ENCODE measurements at regions of chr11 and their contacts with region 1.

Region 1: DNA sequence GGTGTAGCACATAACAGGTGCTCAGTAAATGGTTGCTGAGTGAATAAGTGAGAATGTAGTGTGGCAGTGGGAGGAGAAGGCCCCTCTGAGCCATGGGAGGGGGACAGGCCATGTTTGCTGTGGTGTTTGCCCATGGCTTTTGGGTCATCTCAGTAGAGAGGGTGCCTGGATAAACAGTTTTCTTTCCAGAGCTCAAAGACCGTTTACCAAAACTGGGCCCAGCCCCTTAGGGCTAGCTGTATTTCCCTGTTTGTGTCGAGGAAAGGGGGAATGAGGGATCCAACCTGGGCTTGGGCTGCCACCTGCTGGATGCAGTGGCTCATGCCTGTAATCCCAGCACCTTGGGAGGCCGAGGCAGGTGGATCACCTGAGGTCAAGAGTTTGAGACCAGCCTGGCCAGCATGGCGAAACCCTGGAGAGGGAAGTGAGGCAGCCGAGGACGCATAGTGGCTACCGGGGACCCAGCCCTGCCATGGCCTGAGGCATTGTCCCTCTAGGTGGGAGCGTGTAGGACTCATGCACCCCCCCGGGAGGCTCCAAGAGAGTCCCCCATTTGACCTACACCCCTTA is 8.7 kb upstream of the LTO1 start:
- DNase-seq: peak; percentile 30
- H3K4me3 ChIP-seq: no peak overlapping the region
- H3K27ac ChIP-seq: no peak overlapping the region
- H3K4me1 ChIP-seq: peaks cover 11% of the 10 kb centered on the region
- H3K27me3 ChIP-seq: no peaks in the 10 kb centered on the region
- CTCF ChIP-seq: peak; percentile 43 to 71

Region 2: GRCh38 chr11:69427337-69427736 is 256.5 kb before region 1 on chr11:
- CTCF ChIA-PET with region 1: no interaction called
- dilution Hi-C with region 1: no loop called
- in situ Hi-C with region 1: no loop called
- intact Hi-C with region 1: no loop called
- DNase-seq: no peak
- H3K4me3 ChIP-seq: no peak overlapping the region
- H3K27ac ChIP-seq: no peak overlapping the region
- H3K4me1 ChIP-seq: peaks cover 1% of the 10 kb centered on the region
- H3K27me3 ChIP-seq: no peaks in the 10 kb centered on the region
- CTCF ChIP-seq: no peak

Region 3: GRCh38 chr11:69718147-69718546 is 34.3 kb after region 1 on chr11:
- CTCF ChIA-PET with region 1: no interaction called
- dilution Hi-C with region 1: no loop called
- in situ Hi-C with region 1: no loop called
- intact Hi-C with region 1: no loop called
- DNase-seq: no peak
- H3K4me3 ChIP-seq: no peak overlapping the region
- H3K27ac ChIP-seq: no peak overlapping the region
- H3K4me1 ChIP-seq: no peaks in the 10 kb centered on the region
- H3K27me3 ChIP-seq: peaks cover 2% of the 10 kb centered on the region
- CTCF ChIP-seq: peak; percentile 11 to 27

Region 4: GRCh38 chr11:69775163-69775755 is 91.4 kb after region 1 on chr11 and contains the start of gene FGF4:
- CTCF ChIA-PET with region 1: no interaction called
- dilution Hi-C with region 1: no loop called
- in situ Hi-C with region 1: no loop called
- intact Hi-C with region 1: no loop called
- DNase-seq: peak; percentile 1
- H3K4me3 ChIP-seq: no peak within 1 kb of the TSS
- H3K27ac ChIP-seq: no peak within 1 kb of the TSS
- H3K4me1 ChIP-seq: no peaks in the 10 kb centered on the region
- H3K27me3 ChIP-seq: peaks cover 27% of the 10 kb centered on the region
- CTCF ChIP-seq: no peak
- total RNA-seq, gene FGF4: not detected

Region 5: DNA sequence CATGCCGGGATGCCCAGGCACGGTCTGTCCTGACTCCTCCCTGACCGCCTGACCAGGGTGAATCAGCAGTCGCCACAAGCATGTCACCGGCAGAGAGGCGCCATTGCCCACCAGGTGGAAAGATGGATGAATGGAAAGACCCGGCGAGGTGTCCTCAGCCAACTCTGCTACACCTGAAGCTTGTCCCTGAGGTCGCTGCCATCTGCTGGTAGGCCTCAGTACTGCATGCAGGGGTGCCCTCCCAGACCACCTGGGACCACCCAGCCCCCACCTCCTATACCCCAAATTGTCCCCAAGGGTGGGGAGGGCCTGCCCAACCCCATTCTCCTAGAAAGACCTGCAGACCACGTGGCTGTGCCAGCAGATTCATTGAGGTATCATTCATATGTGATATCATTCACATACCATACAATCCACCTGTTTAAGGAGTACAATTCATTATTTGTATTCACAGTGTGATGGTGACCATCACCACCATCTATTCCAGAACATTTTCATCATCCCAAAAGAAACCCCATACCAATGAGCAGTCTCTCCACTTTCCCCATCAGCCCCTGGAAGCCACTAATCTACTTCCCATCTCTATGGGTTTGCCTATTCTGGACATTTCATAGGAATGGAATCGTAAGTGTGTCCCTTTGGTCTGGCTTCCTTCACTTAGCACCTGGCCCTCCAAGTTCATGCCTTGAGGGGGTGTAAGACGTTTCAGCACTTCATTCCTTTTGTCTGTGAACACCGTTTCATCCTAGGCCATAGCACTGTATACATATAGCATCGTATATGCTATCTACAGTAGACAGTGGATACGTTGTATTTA is 117.9 kb after region 1 on chr11:
- CTCF ChIA-PET with region 1: no interaction called
- dilution Hi-C with region 1: no loop called
- in situ Hi-C with region 1: no loop called
- intact Hi-C with region 1: loop called (anchors 1 kb)
- DNase-seq: no peak
- H3K4me3 ChIP-seq: no peak overlapping the region
- H3K27ac ChIP-seq: no peak overlapping the region
- H3K4me1 ChIP-seq: no peaks in the 10 kb centered on the region
- H3K27me3 ChIP-seq: no peaks in the 10 kb centered on the region
- CTCF ChIP-seq: peak; percentile 67 to 84

Region 6: GRCh38 chr11:69909561-69910496 is 226.0 kb after region 1 on chr11:
- CTCF ChIA-PET with region 1: no interaction called
- dilution Hi-C with region 1: no loop called
- in situ Hi-C with region 1: loop called in 1 of 2 experiments (anchors 10 kb)
- intact Hi-C with region 1: loop called (anchors 1 kb)
- DNase-seq: no peak
- H3K4me3 ChIP-seq: no peak overlapping the region
- H3K27ac ChIP-seq: no peak overlapping the region
- H3K4me1 ChIP-seq: peaks cover 28% of the 10 kb centered on the region
- H3K27me3 ChIP-seq: no peaks in the 10 kb centered on the region
- CTCF ChIP-seq: peak; percentile 35 to 65

Region 7: GRCh38 chr11:70082829-70083228 is 399.0 kb after region 1 on chr11:
- CTCF ChIA-PET with region 1: no interaction called
- dilution Hi-C with region 1: no loop called
- in situ Hi-C with region 1: no loop called
- intact Hi-C with region 1: loop called (anchors 5 kb)
- DNase-seq: no peak
- H3K4me3 ChIP-seq: no peak overlapping the region
- H3K27ac ChIP-seq: no peak overlapping the region
- H3K4me1 ChIP-seq: peaks cover 49% of the 10 kb centered on the region
- H3K27me3 ChIP-seq: no peaks in the 10 kb centered on the region
- CTCF ChIP-seq: peak; percentile 37 to 51

Measured in mammary epithelial cell (primary cell).